MCF 10A (cell line): ENCODE measurements at regions of chr9 and their contacts with region 1.

Region 1: DNA sequence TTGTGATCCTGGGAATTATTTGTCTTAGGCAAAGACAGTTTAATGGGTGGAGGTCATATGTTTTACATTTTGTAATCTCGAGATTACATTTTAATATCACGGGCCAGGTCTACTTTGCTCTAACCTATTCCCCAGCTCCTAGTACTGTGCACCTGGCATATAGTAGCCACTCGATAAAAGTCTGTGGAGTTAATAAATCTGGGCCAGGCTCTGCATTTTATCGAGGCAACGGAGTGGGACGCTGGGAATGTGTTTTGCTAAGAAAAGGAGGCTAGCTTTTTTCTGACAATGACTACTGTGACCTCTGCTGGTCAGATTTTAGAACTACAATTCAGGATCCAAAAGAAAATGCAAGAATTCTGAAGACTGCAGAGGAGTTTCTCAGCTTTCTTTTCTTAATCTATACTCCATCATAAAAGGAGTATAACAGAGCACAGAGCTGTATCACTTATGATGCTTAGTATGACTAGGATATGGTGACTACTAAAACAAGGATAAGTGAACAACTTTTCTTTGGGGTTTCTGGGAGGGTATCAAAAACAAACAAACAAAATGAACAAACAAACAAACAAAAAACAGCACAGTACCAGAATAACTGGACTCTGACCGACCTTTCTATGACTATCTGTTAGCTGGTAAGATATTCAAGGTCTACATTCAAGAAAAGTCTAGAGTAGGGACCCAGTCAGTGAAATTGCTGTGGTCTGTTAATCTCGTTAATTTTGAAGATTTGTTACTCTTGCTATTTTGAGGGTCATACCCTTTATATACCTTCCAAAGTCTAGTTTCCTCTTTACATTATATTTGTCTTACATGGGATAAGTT is 46.1 kb upstream of the CER1 start:
- DNase-seq: peak; percentile 61
- H3K4me3 Mint-ChIP-seq: no peak overlapping the region
- H3K27ac Mint-ChIP-seq: peak overlapping the region; percentile 31
- H3K4me1 Mint-ChIP-seq: no peaks in the 10 kb centered on the region
- H3K27me3 Mint-ChIP-seq: peaks cover 59% of the 10 kb centered on the region
- CTCF ChIP-seq: peak; percentile 67

Region 2: DNA sequence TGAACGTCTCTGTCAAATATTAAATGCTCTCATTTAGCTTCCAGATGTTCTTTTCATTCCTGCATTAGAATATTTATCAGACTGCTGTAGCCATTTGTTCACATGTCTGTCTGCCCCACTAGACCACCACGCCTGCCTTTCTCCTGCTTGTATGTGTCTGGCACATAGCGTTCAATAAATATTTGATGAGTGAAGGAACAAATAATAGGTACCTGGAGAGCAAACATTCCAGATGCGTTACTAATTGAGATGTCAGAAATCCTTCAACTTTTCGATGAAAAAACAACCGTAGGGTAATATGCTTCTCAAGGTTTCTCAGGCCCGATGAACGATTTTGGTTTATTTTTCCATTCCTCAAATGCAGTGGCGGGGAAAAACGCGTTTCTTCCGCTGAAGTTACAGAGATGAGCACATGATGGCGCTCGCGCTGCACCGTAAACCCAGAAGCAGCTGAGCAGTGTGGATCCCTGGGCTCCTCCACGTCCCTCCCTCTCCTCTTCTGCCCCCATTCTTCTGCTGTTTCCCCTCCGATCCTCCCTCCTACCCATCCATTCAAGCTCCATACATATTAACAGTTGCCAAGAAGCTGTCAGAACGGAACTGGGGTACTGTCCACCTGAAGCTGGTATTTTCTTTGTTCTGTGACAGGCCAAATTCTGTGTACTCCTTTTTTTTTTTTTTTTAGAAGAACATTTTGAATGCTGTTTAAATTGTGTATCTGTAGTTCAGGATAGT is 1734.5 kb before region 1 on chr9:
- CTCF ChIA-PET with region 1: interaction called, 3 read pairs
- POLR2A ChIA-PET with region 1: no interaction called
- intact Hi-C with region 1: loop called (anchors 2 kb)
- DNase-seq: peak; percentile 68
- H3K4me3 Mint-ChIP-seq: peak overlapping the region; percentile 30
- H3K27ac Mint-ChIP-seq: no peak overlapping the region
- H3K4me1 Mint-ChIP-seq: peaks cover 16% of the 10 kb centered on the region
- H3K27me3 Mint-ChIP-seq: no peaks in the 10 kb centered on the region
- CTCF ChIP-seq: peak; percentile 83

Region 3: GRCh38 chr9:14608540-14608939 is 160.1 kb before region 1 on chr9:
- CTCF ChIA-PET with region 1: interaction called, 10 read pairs
- POLR2A ChIA-PET with region 1: no interaction called
- intact Hi-C with region 1: no loop called
- DNase-seq: no peak
- H3K4me3 Mint-ChIP-seq: no peak overlapping the region
- H3K27ac Mint-ChIP-seq: no peak overlapping the region
- H3K4me1 Mint-ChIP-seq: no peaks in the 10 kb centered on the region
- H3K27me3 Mint-ChIP-seq: no peaks in the 10 kb centered on the region
- CTCF ChIP-seq: no peak

Region 4: DNA sequence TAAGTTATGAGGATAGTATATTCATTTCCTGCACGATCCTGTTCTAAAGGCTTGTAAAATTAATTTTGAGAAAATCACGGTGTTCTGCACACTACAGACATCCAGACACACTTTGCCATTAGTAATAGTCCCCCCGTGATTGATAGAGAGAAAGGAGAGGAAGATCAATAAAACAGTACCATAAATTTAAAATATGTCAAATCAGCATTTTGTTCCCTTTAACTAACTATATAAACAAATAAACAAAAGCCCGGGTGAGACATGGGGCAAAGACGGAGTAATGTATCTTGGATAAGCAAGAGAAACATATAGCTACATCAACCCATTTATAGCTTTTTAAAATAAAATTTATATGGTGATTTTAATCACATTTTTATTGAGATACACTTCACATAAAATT is 35.5 kb before region 1 on chr9:
- CTCF ChIA-PET with region 1: no interaction called
- POLR2A ChIA-PET with region 1: no interaction called
- intact Hi-C with region 1: no loop called
- DNase-seq: no peak
- H3K4me3 Mint-ChIP-seq: no peak overlapping the region
- H3K27ac Mint-ChIP-seq: no peak overlapping the region
- H3K4me1 Mint-ChIP-seq: no peaks in the 10 kb centered on the region
- H3K27me3 Mint-ChIP-seq: peaks cover 74% of the 10 kb centered on the region
- CTCF ChIP-seq: no peak

Region 5: GRCh38 chr9:14779566-14780022 is 11.0 kb after region 1 on chr9:
- CTCF ChIA-PET with region 1: interaction called, 31 read pairs
- POLR2A ChIA-PET with region 1: interaction called, 3 read pairs
- intact Hi-C with region 1: no loop called
- DNase-seq: peak; percentile 12
- H3K4me3 Mint-ChIP-seq: no peak overlapping the region
- H3K27ac Mint-ChIP-seq: no peak overlapping the region
- H3K4me1 Mint-ChIP-seq: no peaks in the 10 kb centered on the region
- H3K27me3 Mint-ChIP-seq: peaks cover 55% of the 10 kb centered on the region
- CTCF ChIP-seq: no peak

Region 6: GRCh38 chr9:14857449-14858305 is 89.1 kb after region 1 on chr9:
- CTCF ChIA-PET with region 1: no interaction called
- POLR2A ChIA-PET with region 1: no interaction called
- intact Hi-C with region 1: no loop called
- DNase-seq: no peak
- H3K4me3 Mint-ChIP-seq: no peak overlapping the region
- H3K27ac Mint-ChIP-seq: no peak overlapping the region
- H3K4me1 Mint-ChIP-seq: no peaks in the 10 kb centered on the region
- H3K27me3 Mint-ChIP-seq: peaks cover 44% of the 10 kb centered on the region
- CTCF ChIP-seq: no peak

Region 7: DNA sequence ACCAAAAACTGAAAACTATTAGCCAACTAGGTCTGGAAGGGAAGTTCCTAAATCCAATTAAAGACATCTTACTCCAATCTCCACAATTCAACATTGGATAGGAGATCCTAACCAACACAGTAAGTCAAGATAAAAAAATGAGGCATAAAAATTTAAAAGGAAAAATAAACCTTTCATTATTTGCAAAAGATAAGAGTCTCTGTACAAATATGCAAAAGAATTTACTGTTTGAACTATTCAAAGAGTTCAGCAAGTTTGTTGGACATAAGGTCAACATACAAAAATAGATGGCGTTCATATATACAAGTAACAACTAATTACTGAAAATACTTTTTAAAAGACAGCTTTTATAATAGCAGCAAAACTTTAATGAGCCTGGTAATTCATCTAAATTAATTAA is 144.7 kb after region 1 on chr9:
- CTCF ChIA-PET with region 1: no interaction called
- POLR2A ChIA-PET with region 1: no interaction called
- intact Hi-C with region 1: no loop called
- DNase-seq: no peak
- H3K4me3 Mint-ChIP-seq: no peak overlapping the region
- H3K27ac Mint-ChIP-seq: no peak overlapping the region
- H3K4me1 Mint-ChIP-seq: no peaks in the 10 kb centered on the region
- H3K27me3 Mint-ChIP-seq: peaks cover 44% of the 10 kb centered on the region
- CTCF ChIP-seq: no peak

Region 8: DNA sequence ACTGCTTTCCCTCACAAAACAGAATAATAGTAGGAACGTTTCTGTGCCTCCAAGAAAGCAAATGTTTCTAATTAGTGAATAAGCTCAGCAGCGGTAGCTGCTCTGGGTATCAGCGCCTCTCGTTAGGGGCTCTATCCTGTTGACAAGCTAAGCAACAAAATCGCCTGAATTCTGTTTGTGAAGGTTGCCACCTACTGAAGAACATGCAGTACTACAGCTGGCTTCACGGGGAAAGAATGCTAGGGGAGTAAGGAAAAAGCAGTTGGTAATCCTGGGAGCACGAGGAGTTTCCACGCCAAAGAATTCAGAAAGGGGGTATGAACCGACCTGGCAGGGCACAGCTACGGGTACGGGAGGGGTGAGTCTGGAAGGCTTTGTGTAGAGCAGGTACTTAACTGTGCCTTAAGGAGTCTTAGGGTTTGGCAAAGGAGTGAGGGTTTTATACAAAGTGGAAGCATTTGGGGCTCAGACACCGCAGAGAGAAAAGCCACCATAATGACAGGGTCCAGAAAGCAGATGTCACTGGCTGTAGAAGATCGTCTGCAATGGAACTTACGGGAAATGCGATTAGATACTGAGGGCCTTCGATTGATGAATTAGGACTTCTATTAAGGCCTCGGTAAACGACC is 366.7 kb after region 1 on chr9:
- CTCF ChIA-PET with region 1: interaction called, 10 read pairs
- POLR2A ChIA-PET with region 1: no interaction called
- intact Hi-C with region 1: no loop called
- DNase-seq: peak; percentile 82
- H3K4me3 Mint-ChIP-seq: peak overlapping the region; percentile 11
- H3K27ac Mint-ChIP-seq: no peak overlapping the region
- H3K4me1 Mint-ChIP-seq: peaks cover 6% of the 10 kb centered on the region
- H3K27me3 Mint-ChIP-seq: no peaks in the 10 kb centered on the region
- CTCF ChIP-seq: peak; percentile 82